Caco-2 (cell line): ENCODE measurements at regions of chr10 and their contacts with region 1.

Region 1: GRCh38 chr10:22988581-22989360 is 60.9 kb downstream of the ARMC3 start:
- DNase-seq: peak; percentile 57 to 79
- H3K4me3 ChIP-seq: no peak overlapping the region
- H3K4me3 Mint-ChIP-seq: peak overlapping the region; percentile 42
- H3K27ac Mint-ChIP-seq: no peak overlapping the region
- H3K4me1 ChIP-seq: peaks cover 8% of the 10 kb centered on the region
- H3K4me1 Mint-ChIP-seq: no peaks in the 10 kb centered on the region
- H3K27me3 ChIP-seq: no peaks in the 10 kb centered on the region
- H3K27me3 Mint-ChIP-seq: peaks cover 4% of the 10 kb centered on the region
- CTCF ChIP-seq: peak; percentile 95 to 97

Region 2: GRCh38 chr10:22259280-22259679 is 729.5 kb before region 1 on chr10:
- CTCF ChIA-PET with region 1: no interaction called
- POLR2A ChIA-PET with region 1: no interaction called
- intact Hi-C with region 1: loop called (anchors 2 kb)
- DNase-seq: no peak
- H3K4me3 ChIP-seq: no peak overlapping the region
- H3K4me3 Mint-ChIP-seq: no peak overlapping the region
- H3K27ac Mint-ChIP-seq: no peak overlapping the region
- H3K4me1 ChIP-seq: no peaks in the 10 kb centered on the region
- H3K4me1 Mint-ChIP-seq: no peaks in the 10 kb centered on the region
- H3K27me3 ChIP-seq: no peaks in the 10 kb centered on the region; the same call in 1 of the 2 replicates
- H3K27me3 Mint-ChIP-seq: peaks cover 11% of the 10 kb centered on the region
- CTCF ChIP-seq: no peak

Region 3: DNA sequence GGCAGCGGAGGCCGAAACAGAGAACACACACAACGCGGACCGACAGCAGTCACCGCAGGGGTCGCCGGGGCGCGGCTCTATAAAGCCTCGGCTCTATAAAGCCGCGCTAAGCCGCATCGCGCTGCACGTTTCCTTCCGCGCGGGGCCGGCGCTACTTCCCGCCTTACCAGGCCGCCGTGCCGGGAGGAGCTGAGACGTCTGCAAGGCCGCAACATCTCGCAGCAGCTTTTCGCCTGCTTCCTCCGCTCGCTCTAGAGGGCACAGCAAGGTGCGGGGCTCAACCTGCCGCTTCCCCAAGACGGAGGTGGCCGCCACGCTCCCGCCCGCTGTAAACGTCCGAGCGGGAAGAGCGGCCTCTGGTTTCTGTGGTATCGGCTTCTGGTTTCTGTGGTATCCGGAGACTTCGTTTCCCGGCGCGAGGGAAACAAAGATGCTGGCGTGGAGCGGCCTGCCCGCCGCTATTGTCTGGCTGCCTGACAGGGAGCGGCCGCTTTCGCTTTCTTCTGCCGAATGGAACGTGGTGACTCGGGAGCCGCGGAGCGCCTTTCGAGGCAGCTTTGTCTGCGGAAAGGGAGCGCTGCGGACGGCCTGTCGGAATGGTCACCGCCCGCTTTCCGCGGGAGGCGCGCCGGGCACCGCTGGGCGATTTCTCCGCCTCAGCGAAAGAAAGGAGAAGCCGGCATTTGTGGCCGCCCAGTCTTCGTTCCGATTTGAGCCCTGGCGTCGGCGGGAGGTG is 551.7 kb before region 1 on chr10:
- CTCF ChIA-PET with region 1: no interaction called
- POLR2A ChIA-PET with region 1: no interaction called
- intact Hi-C with region 1: loop called (anchors 10 kb)
- DNase-seq: peak; percentile 84 to 85
- H3K4me3 ChIP-seq: peak overlapping the region; percentile 54
- H3K4me3 Mint-ChIP-seq: peak overlapping the region; percentile 92
- H3K27ac Mint-ChIP-seq: peak overlapping the region; percentile 90
- H3K4me1 ChIP-seq: peaks cover 41% of the 10 kb centered on the region
- H3K4me1 Mint-ChIP-seq: peaks cover 62% of the 10 kb centered on the region
- H3K27me3 ChIP-seq: no peaks in the 10 kb centered on the region
- H3K27me3 Mint-ChIP-seq: no peaks in the 10 kb centered on the region
- CTCF ChIP-seq: peak in 1 of 2 experiments; percentile 41

Region 4: GRCh38 chr10:22589851-22590514 is 398.8 kb before region 1 on chr10:
- CTCF ChIA-PET with region 1: no interaction called
- POLR2A ChIA-PET with region 1: no interaction called
- intact Hi-C with region 1: loop called (anchors 5 kb)
- DNase-seq: no peak
- H3K4me3 ChIP-seq: no peak overlapping the region
- H3K4me3 Mint-ChIP-seq: no peak overlapping the region
- H3K27ac Mint-ChIP-seq: no peak overlapping the region
- H3K4me1 ChIP-seq: no peaks in the 10 kb centered on the region
- H3K4me1 Mint-ChIP-seq: no peaks in the 10 kb centered on the region
- H3K27me3 ChIP-seq: no peaks in the 10 kb centered on the region
- H3K27me3 Mint-ChIP-seq: no peaks in the 10 kb centered on the region
- CTCF ChIP-seq: no peak

Region 5: DNA sequence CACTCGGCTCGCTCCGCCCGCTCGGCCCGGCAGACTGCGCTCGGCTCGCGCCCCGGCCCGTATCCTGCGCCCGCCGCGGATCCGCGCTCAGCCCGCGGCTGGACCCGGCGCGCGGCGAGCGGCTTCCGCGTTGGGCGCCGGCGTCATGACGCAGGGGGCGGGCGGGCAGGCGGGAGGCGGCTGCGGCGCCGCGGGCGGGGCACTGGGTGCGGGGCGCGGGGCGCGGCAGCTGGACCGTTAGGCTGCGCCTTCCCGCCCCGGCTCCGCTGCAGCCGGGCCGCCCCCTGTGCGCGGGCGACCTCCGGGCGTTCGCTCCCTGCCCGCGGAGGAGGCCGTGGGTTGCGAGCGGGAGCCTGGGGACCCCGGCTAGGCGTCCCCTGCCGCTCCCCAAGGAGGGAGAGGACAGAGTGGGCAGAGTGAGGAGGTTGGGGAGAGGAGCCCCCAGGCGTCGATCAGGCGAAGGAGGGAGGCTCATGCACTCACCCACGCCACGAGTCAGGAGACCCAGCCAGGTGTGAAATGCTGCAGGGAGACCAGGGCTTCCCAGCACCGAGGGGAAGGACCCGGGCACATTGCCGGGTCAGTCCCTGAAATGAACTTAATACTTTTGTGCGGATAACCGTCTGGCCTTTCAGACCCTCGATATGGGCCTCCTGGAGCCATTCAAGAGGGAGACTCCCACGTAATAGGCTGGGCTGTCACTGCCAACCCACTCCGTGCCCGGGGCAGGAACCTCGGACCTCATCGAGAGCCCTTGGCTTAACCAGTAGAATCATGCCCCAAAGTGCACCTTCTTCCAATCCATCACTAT is 274.1 kb before region 1 on chr10 and contains the start of gene PIP4K2A:
- CTCF ChIA-PET with region 1: no interaction called
- POLR2A ChIA-PET with region 1: no interaction called
- intact Hi-C with region 1: loop called (anchors 5 kb)
- DNase-seq: peak; percentile 63 to 85
- H3K4me3 ChIP-seq: peak within 1 kb of the TSS; percentile 81
- H3K4me3 Mint-ChIP-seq: peak within 1 kb of the TSS; percentile 75
- H3K27ac Mint-ChIP-seq: no peak within 1 kb of the TSS
- H3K4me1 ChIP-seq: peaks cover 6% of the 10 kb centered on the region
- H3K4me1 Mint-ChIP-seq: no peaks in the 10 kb centered on the region
- H3K27me3 ChIP-seq: no peaks in the 10 kb centered on the region
- H3K27me3 Mint-ChIP-seq: no peaks in the 10 kb centered on the region
- CTCF ChIP-seq: no peak
- total RNA-seq, gene PIP4K2A: 25.2 and 26.9 TPM in 2 replicates